B cell (primary cell): ENCODE measurements at regions of chr20 and their contacts with region 1.

Region 1: GRCh38 chr20:4985658-4986057 is 15.7 kb downstream of the SLC23A2 start:
- DNase-seq: peak; percentile 67
- ATAC-seq: peak; percentile 61
- H3K4me3 ChIP-seq: peak overlapping the region in 1 of 5 experiments; percentile 19
- H3K4me3 Mint-ChIP-seq: peak overlapping the region; percentile 82
- H3K27ac ChIP-seq: peak overlapping the region; percentile 73 to 75
- H3K27ac Mint-ChIP-seq: peak overlapping the region; percentile 91
- H3K4me1 ChIP-seq: peaks cover 60 to 69% of the 10 kb centered on the region in 2 donors
- H3K4me1 Mint-ChIP-seq: peaks cover 71% of the 10 kb centered on the region
- H3K27me3 ChIP-seq: no peaks in the 10 kb centered on the region
- H3K27me3 Mint-ChIP-seq: no peaks in the 10 kb centered on the region
- CTCF ChIP-seq: no peak

Region 2: DNA sequence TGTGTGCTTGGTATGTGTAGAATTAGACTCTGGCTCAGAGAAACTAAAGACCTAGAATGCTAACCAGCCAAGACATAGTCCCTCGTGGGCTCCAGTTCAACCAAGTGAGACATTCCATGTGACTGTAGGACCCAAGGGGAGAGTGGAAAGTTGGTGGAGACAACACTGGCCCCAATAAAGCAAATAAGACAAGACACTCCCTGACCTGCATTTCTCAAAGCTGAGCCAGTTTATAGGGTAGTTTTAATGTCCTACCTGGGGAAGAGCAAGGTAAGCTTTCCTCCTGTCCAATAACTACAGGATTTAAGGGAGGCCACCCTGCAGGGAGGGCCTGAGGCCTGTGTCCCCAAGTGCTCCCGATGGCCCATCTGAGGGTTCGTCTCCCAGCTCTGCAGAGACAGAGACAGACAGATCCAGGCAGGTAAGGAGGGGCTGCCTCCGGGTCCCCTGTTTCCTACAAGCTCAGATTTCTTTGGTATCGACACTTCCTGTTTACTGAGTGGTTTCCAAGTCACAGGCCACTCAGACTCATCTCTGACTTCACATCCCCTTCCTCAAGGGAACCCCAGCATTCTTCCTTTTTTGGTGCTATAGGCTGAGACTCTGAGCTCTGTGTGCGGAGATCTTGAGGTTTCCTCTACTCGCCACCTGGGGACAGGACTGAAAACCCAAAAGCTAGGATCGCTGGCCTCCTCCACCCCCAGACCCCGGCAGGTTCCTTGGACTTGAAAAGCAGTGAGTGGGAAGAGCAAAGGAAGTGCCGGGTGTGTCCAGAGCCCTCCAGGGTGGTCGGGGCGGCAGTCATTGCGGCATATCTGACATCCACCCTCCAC is 171.6 kb before region 1 on chr20:
- CTCF ChIA-PET with region 1: interaction called, 3 read pairs
- POLR2A ChIA-PET with region 1: interaction called, 3 read pairs
- intact Hi-C with region 1: loop called (anchors 1 kb)
- DNase-seq: peak; percentile 94
- ATAC-seq: peak; percentile 48
- H3K4me3 ChIP-seq: peak overlapping the region; percentile 49 to 67 (median 50)
- H3K4me3 Mint-ChIP-seq: peak overlapping the region; percentile 92
- H3K27ac ChIP-seq: peak overlapping the region; percentile 99
- H3K27ac Mint-ChIP-seq: peak overlapping the region; percentile 99
- H3K4me1 ChIP-seq: peaks cover 69 to 82% of the 10 kb centered on the region in 2 donors
- H3K4me1 Mint-ChIP-seq: peaks cover 87% of the 10 kb centered on the region
- H3K27me3 ChIP-seq: no peaks in the 10 kb centered on the region
- H3K27me3 Mint-ChIP-seq: no peaks in the 10 kb centered on the region
- CTCF ChIP-seq: peak; percentile 12

Region 3: DNA sequence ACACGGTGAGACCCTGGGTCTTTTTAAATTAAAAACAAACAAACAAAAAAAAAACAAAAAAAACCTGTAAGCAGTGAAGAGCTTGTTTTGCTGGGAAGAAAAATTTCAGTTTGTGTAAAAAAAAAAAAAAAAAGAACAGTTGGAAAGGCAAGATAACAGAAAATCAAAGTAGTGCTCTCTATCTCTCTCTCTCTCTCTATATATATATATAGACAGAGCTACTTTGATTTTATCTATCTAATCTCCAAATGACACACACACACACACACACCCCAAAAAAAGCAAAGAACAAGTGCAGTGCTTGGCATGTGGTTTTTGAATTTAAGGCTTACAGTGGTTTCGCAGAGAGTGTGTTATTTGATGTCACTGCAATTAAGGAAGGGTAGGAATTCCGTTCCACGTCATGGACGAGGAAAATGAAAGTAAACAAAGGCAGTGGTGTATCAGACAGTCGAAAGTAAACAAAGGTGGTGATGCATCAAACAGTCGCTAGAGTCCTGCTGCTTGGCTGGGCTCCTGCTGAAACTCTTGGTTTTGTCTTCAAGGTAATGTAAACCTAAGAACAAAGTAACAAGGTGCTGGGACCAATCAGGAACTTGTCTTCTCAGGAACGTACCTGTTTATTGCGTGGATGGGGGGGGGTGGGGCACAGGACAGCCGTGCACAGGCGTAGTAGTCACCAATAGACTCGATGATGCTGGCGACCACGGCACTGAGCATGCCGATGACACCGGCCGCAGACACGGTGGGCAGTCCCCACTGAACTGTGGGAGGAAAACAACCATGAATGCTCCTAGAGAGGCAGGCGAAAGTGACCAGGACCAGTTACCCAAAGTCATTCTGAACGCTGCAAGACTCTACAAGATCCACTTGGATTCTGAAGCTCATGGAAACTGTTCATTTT is 116.1 kb before region 1 on chr20:
- CTCF ChIA-PET with region 1: no interaction called
- POLR2A ChIA-PET with region 1: no interaction called
- intact Hi-C with region 1: no loop called
- DNase-seq: no peak
- ATAC-seq: no peak
- H3K4me3 ChIP-seq: no peak overlapping the region
- H3K4me3 Mint-ChIP-seq: no peak overlapping the region
- H3K27ac ChIP-seq: no peak overlapping the region
- H3K27ac Mint-ChIP-seq: no peak overlapping the region
- H3K4me1 ChIP-seq: no peaks in the 10 kb centered on the region
- H3K4me1 Mint-ChIP-seq: no peaks in the 10 kb centered on the region
- H3K27me3 ChIP-seq: no peaks in the 10 kb centered on the region
- H3K27me3 Mint-ChIP-seq: no peaks in the 10 kb centered on the region
- CTCF ChIP-seq: no peak

Region 4: DNA sequence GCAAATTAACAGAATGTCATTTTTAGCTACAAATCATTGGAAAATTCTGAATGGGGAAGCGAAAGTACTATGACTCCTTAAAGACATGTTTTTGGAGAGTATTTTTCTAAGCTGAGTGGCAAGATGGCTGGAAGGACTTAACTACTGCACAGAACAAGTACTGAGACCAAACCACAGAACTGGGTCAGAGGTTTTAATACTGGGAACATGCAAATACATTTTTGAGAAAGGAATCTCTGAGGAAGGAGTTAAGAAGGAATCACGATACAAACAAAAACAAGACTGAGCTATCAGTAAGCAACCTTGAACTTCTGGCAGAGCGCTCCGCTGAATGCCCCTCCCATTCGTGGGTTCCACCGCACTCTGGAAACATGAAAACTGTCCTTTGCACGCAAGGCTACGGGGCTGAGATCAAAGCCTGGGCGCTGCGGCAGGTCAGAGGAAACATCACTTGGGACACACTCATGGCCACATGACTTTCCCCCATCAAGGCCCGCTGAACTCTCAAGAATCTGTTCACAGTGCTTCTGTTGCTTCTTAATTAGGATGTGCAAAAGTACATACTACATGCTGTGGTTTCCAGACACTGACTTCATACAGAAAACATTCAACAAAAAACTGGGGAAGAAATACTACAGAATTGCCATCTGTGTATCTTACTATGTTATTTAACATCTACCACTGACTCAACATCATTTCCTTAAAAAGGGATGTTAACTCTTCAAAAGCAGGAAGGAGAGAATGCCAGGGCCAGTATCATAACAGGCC is 12.1 kb before region 1 on chr20:
- CTCF ChIA-PET with region 1: interaction called, 13 read pairs
- POLR2A ChIA-PET with region 1: interaction called, 10 read pairs
- intact Hi-C with region 1: loop called (anchors 1 kb)
- DNase-seq: peak; percentile 66
- ATAC-seq: peak; percentile 83
- H3K4me3 ChIP-seq: peak overlapping the region in 4 of 5 experiments; percentile 16 to 58 (median 40)
- H3K4me3 Mint-ChIP-seq: peak overlapping the region; percentile 87
- H3K27ac ChIP-seq: peak overlapping the region; percentile 36 to 40
- H3K27ac Mint-ChIP-seq: peak overlapping the region; percentile 84
- H3K4me1 ChIP-seq: peaks cover 21 to 30% of the 10 kb centered on the region in 2 donors
- H3K4me1 Mint-ChIP-seq: peaks cover 46% of the 10 kb centered on the region
- H3K27me3 ChIP-seq: no peaks in the 10 kb centered on the region
- H3K27me3 Mint-ChIP-seq: no peaks in the 10 kb centered on the region
- CTCF ChIP-seq: no peak

Region 5: GRCh38 chr20:5001174-5002076 is 15.8 kb after region 1 on chr20 and contains the start of gene SLC23A2:
- CTCF ChIA-PET with region 1: interaction called, 22 read pairs
- POLR2A ChIA-PET with region 1: interaction called, 6 read pairs
- intact Hi-C with region 1: loop called (anchors 1 kb)
- DNase-seq: peak; percentile 73
- ATAC-seq: peak; percentile 77
- H3K4me3 ChIP-seq: peak within 1 kb of the TSS; percentile 51 to 81 (median 71)
- H3K4me3 Mint-ChIP-seq: peak within 1 kb of the TSS; percentile 97
- H3K27ac ChIP-seq: peak within 1 kb of the TSS; percentile 43 to 71
- H3K27ac Mint-ChIP-seq: peak within 1 kb of the TSS; percentile 97
- H3K4me1 ChIP-seq: peaks cover 28 to 39% of the 10 kb centered on the region in 2 donors
- H3K4me1 Mint-ChIP-seq: peaks cover 37% of the 10 kb centered on the region
- H3K27me3 ChIP-seq: no peaks in the 10 kb centered on the region
- H3K27me3 Mint-ChIP-seq: no peaks in the 10 kb centered on the region
- CTCF ChIP-seq: no peak
- total RNA-seq, gene SLC23A2: 70.7 and 75.2 TPM in 2 replicates

Region 6: DNA sequence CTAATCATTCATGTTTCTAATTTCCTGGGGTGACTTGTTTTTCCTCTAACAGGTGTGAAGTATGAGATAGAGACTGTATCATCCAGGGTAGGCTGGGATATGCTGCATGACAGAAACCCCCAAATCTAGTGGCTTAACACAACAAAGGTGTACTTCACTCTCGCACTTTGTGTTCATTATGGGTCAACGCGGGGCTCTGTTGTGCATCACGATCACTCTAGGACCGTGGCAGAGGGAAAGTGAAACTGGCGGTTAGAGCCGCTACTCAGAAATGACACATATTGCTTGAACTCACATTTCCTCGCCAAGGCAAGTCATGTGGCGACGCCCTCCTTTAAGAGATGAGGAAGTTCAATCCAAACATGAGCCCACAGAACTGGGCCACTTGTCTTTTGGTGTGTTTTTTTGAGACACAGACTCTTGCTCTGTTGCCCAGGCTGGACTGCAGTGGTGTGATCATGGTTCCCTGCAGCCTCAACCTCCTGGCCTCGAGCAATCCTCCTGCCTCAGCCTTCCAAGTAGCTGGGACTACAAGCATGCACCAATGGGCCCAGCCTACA is 92.8 kb after region 1 on chr20:
- CTCF ChIA-PET with region 1: no interaction called
- POLR2A ChIA-PET with region 1: interaction called, 3 read pairs
- intact Hi-C with region 1: loop called (anchors 1 kb)
- DNase-seq: peak; percentile 91
- ATAC-seq: peak; percentile 96
- H3K4me3 ChIP-seq: peak overlapping the region; percentile 23 to 68 (median 50)
- H3K4me3 Mint-ChIP-seq: peak overlapping the region; percentile 85
- H3K27ac ChIP-seq: peak overlapping the region; percentile 85 to 93
- H3K27ac Mint-ChIP-seq: peak overlapping the region; percentile 94
- H3K4me1 ChIP-seq: peaks cover 37 to 50% of the 10 kb centered on the region in 2 donors
- H3K4me1 Mint-ChIP-seq: peaks cover 51% of the 10 kb centered on the region
- H3K27me3 ChIP-seq: no peaks in the 10 kb centered on the region
- H3K27me3 Mint-ChIP-seq: no peaks in the 10 kb centered on the region
- CTCF ChIP-seq: no peak

Region 7: DNA sequence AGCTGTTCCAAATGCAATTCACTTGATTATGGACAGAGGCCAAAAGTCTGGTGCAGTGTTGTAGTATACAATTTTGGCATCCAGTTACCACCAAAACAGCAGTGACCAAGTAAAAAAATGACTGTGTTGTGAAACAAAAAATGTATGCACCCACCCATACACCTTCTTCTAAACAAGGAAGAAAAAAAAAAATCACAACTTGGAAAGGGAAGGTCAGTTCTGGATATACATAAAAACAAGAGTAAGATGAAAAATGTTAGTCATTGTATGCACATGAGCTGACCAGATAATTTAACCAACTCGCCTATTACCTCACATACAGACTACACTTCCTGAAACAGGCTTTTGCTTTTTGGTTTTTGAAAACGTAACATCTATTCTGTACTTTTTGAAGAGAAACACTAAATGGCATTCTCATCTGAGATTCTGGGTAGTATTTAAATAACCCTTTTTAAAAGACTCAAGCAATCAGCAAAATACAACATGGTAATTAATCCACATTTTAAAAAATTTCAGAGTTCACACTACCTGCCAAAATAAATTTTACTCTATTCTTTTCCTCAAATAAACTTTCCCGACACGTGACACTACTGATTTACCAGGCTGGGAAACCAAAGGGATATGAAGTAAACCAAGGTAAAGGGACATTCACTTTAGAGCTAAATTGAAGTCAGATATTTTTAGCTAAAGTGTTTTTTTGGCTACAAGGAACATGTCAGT is 622.9 kb after region 1 on chr20:
- CTCF ChIA-PET with region 1: no interaction called
- POLR2A ChIA-PET with region 1: no interaction called
- intact Hi-C with region 1: loop called (anchors 5 kb)
- DNase-seq: peak; percentile 32
- ATAC-seq: no peak
- H3K4me3 ChIP-seq: peak overlapping the region; percentile 70 to 98 (median 85)
- H3K4me3 Mint-ChIP-seq: peak overlapping the region; percentile 97
- H3K27ac ChIP-seq: peak overlapping the region; percentile 93 to 95
- H3K27ac Mint-ChIP-seq: peak overlapping the region; percentile 82
- H3K4me1 ChIP-seq: peaks cover 57% of the 10 kb centered on the region in 2 donors
- H3K4me1 Mint-ChIP-seq: peaks cover 58% of the 10 kb centered on the region
- H3K27me3 ChIP-seq: no peaks in the 10 kb centered on the region
- H3K27me3 Mint-ChIP-seq: no peaks in the 10 kb centered on the region
- CTCF ChIP-seq: no peak